GM10248 (cell line): ENCODE measurements at regions of chr3 and their contacts with region 1.

Region 1: DNA sequence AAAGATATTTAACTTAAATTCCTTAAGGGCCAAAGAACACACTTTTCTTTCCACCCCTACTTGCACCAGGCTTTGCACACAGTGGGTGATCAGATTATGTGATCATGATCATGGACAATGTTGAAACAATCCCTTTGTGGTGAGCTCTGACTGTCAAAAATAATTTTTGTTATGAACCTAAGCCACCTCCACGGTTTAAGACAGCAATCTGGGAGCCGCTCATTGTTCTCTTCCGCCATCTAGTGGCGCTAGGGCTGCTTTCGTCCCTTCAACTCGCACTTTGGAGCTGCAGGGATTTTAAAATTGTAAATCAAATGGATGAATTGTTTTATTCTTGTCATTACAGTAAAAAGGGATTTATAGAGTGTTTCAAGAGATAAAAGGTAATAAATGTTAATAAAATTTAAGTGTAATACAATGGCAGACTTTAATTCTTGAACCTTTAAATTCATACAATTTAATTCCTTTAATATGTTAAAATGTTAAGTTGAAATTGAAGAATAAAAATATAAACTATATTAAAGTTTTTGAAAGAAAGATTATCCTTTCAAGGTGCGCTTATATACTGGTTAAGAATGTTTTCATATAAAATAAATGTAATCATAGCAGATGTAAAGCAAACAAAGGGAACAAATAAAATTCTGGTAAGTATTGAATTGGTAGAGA is 45.3 kb upstream of the ARL6 start:
- DNase-seq: peak; percentile 50
- CTCF ChIP-seq: peak; percentile 86

Region 2: DNA sequence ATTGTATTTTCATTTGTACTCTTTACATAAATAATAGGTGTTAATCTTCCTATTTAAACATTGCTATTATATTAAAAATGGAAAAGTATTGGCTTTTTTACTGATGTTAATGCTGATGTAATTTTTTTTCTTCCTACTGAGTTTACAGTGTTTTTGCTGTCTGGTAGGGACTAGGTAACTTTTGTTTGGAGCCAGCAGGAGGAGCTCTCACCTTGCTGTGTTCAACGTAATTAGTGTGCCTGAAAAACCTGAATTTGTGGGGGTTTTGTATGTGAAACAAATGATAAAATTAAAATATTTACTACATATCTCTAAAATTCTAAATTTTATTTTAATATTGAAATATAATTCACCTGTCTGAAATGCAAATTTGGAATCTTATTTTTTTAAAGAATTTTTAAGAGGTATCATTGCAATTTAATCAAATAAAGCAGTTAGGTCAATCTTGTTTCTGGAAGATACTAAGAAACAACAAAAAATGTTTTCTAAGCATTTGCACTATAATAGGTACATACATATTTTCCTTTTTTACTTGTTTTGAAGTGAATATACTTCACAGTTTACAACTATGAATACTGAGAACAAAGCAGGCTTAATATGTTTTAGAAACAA is 856.1 kb before region 1 on chr3:
- CTCF ChIA-PET with region 1: interaction called, 10 read pairs
- POLR2A ChIA-PET with region 1: no interaction called
- DNase-seq: peak; percentile 3
- CTCF ChIP-seq: peak; percentile 66

Region 3: DNA sequence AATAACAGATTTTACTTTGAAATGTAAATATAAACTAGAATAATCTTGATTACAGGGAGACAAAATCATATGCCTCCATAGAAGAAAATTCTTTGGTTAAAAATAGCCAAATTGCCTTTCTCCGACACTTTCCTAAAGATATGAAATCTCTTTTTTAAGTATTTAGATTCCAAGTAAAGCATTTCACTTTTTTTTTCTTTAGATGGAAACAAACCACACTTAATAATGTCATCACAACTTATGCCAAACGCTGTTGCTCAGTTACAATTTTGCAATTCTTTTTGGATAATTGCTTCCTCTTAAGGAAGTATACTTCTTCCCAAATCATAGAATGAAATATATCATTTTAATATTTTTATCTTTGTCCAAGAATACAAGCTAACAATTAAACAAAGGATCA is 248.8 kb before region 1 on chr3:
- CTCF ChIA-PET with region 1: no interaction called
- POLR2A ChIA-PET with region 1: no interaction called
- DNase-seq: no peak
- CTCF ChIP-seq: no peak

Region 4: DNA sequence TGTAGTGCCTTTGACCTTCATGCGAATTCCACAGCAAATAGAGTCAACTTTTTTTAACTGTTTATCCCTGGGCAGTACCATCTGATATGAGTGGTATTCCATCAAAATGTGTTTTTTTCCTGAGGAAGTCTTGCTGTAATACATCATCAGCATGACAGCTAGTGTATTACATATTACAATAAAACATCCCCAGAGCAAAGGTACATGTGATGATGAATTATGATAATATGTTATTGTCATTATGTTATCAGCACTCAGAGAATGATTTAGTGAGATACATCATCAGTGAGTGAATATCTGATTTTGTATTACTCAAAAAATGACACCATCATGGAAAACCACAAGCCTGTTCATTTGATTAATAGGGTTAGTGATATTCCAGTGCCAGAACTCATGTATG is 24.4 kb before region 1 on chr3:
- CTCF ChIA-PET with region 1: interaction called, 14 read pairs
- POLR2A ChIA-PET with region 1: no interaction called
- DNase-seq: no peak
- CTCF ChIP-seq: no peak

Region 5: GRCh38 chr3:97736928-97737327 is 17.6 kb after region 1 on chr3:
- CTCF ChIA-PET with region 1: interaction called, 29 read pairs
- POLR2A ChIA-PET with region 1: no interaction called
- DNase-seq: no peak
- CTCF ChIP-seq: no peak

Region 6: DNA sequence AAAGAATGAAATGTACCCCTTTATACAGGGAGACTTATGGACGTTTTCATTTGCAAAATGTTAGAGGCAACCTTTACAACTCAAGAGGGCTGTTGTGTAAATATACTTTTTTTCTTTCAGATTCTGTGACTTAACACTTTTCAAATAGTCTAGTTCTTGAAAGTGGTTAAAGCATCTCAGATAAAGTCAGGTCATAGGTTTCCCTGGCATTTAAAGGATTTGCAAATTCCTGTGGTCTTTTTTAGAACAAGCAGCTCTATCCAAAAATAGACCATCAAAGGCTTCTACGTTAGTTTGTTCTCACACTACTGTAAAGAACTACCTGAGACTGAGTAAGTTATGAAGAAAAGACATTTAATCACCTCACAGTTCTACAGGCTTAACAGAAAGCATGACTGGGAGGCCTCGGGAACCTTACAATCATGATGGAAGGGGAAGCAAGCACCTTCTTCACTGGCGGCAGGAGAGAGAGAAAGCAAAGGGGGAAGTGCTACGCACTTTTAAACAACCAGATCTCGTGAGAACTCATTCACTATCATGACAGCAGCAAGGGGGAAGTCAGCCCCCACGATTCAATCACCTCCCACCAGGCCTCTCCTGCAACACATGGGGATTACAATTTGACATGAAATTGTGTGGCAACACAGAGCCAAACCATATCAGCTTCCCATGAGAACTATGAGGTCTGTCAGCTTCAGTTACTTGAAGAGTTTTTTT is 339.1 kb after region 1 on chr3:
- CTCF ChIA-PET with region 1: no interaction called
- POLR2A ChIA-PET with region 1: no interaction called
- DNase-seq: no peak
- CTCF ChIP-seq: no peak